ENCODE measurements at regions of chr2 and their contacts with region 1.

Region 1: GRCh38 chr2:41420219-41420618 is 627.6 kb upstream of the PKDCC start:
- DNase-seq: no peak
- ATAC-seq: peak in 2 of 8 donors; percentile 7 to 44
- H3K4me3 ChIP-seq: no peak overlapping the region
- H3K27ac ChIP-seq: peak overlapping the region in 6 of 10 donors; percentile 15 to 43 (median 27)
- H3K4me1 ChIP-seq: peaks cover 0 to 15% (median 10%) of the 10 kb centered on the region in 9 donors
- H3K27me3 ChIP-seq: no peaks in the 10 kb centered on the region
- CTCF ChIP-seq: no peak

Region 2: GRCh38 chr2:41283079-41283775 is 137.0 kb before region 1 on chr2:
- intact Hi-C with region 1: no loop called
- DNase-seq: no peak
- ATAC-seq: no peak
- H3K4me3 ChIP-seq: no peak overlapping the region
- H3K27ac ChIP-seq: no peak overlapping the region
- H3K4me1 ChIP-seq: no peaks in the 10 kb centered on the region
- H3K27me3 ChIP-seq: no peaks in the 10 kb centered on the region
- CTCF ChIP-seq: no peak

Region 3: DNA sequence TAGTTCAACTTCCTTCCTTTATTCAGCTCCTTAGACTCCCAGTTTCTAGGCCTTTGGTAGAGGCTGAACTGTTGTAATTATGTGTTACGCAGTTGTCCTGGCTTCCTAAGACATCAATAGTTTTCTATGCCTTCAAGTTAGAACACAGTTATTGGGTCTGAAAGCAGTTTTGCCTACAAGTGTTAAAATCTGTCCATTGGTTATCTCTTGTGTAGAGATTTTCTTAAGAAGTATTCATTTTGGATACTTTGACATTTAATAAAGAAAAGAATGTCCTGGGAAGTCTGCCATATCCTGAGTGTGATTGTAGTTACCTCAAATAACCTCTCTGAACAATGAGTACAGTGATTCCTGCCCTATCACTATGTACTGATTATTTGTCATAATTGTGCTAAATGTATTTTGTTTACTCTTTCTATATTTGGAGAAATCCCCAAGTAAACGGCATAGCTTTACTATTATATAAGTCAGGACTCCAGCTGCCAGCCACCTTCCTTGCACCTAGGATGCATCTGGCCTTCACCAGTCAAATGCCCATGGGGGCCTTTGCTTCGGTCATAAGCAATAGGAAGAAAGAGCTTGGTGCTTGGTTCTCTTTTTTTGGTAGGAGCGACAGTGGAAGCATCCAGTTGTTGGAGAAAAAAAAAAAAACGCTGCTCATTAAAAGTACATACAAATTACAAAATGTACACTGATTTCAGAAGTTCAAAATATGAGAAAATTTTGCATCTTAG is 178.1 kb after region 1 on chr2:
- intact Hi-C with region 1: loop called in 1 of 10 experiments (anchors 10 kb)
- DNase-seq: peak in 1 of 2 donors; percentile 12
- ATAC-seq: peak; percentile 78 to 95 (median 90)
- H3K4me3 ChIP-seq: no peak overlapping the region
- H3K27ac ChIP-seq: peak overlapping the region in 9 of 10 donors; percentile 18 to 85 (median 75)
- H3K4me1 ChIP-seq: peaks cover 0 to 37% (median 26%) of the 10 kb centered on the region in 9 donors
- H3K27me3 ChIP-seq: no peaks in the 10 kb centered on the region
- CTCF ChIP-seq: no peak